Lower lobe of right lung (tissue), 2 donors: ENCODE measurements at regions of chr3 and their contacts with region 1.

Region 1: DNA sequence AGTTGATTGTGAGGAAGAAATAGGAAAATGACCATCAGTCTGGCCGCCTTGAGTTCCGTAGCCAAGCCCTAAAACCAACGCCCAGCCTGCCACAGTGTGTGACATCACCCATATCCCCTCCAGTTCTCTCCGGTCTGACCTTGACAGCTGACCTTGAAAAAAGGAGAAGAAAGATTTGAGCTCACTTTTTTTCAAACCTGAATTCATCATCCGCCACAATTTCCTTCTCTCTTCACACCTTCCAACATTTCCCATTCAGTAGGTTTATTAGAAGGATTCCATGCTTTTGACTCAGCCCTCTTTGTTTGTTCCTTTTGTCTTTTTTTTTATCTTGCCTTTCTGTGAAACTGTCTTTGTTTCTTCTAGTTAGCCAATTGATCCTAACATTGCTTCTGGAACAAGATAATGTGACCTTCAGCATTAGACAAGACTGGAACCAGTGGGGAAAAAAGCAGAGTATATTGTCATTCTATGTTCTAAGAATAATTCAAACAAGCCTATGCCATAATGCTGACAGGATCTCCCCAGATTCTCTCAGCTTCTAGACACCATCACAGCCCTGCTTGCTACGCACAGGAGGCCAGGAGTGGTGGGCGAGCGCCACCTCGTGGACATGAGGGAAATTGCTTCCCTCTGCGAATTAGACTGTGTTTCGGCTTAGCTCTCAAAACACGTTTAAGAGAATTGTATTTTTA is 283.1 kb downstream of the FGF12 start:
- DNase-seq: peak; percentile 62
- ATAC-seq: peak; percentile 86 to 89
- H3K4me3 ChIP-seq: no peak overlapping the region
- H3K27ac ChIP-seq: no peak overlapping the region
- H3K4me1 ChIP-seq: no peaks in the 10 kb centered on the region
- H3K27me3 ChIP-seq: peaks cover 13% of the 10 kb centered on the region
- CTCF ChIP-seq: peak; percentile 97

Region 2: GRCh38 chr3:192130534-192131132 is 313.6 kb before region 1 on chr3:
- intact Hi-C with region 1: loop called (anchors 10 kb)
- DNase-seq: no peak
- ATAC-seq: peak; percentile 67 to 72
- H3K4me3 ChIP-seq: no peak overlapping the region
- H3K27ac ChIP-seq: no peak overlapping the region
- H3K4me1 ChIP-seq: no peaks in the 10 kb centered on the region
- H3K27me3 ChIP-seq: no peaks in the 10 kb centered on the region
- CTCF ChIP-seq: peak; percentile 68

Region 3: GRCh38 chr3:192188218-192188835 is 255.9 kb before region 1 on chr3:
- intact Hi-C with region 1: loop called (anchors 10 kb)
- DNase-seq: peak; percentile 64
- ATAC-seq: peak in 1 of 2 donors; percentile 63
- H3K4me3 ChIP-seq: no peak overlapping the region
- H3K27ac ChIP-seq: no peak overlapping the region
- H3K4me1 ChIP-seq: no peaks in the 10 kb centered on the region
- H3K27me3 ChIP-seq: no peaks in the 10 kb centered on the region
- CTCF ChIP-seq: peak; percentile 60